Thyroid gland (tissue), 4 donors: ENCODE measurements at regions of chr18 and their contacts with region 1.

Region 1: DNA sequence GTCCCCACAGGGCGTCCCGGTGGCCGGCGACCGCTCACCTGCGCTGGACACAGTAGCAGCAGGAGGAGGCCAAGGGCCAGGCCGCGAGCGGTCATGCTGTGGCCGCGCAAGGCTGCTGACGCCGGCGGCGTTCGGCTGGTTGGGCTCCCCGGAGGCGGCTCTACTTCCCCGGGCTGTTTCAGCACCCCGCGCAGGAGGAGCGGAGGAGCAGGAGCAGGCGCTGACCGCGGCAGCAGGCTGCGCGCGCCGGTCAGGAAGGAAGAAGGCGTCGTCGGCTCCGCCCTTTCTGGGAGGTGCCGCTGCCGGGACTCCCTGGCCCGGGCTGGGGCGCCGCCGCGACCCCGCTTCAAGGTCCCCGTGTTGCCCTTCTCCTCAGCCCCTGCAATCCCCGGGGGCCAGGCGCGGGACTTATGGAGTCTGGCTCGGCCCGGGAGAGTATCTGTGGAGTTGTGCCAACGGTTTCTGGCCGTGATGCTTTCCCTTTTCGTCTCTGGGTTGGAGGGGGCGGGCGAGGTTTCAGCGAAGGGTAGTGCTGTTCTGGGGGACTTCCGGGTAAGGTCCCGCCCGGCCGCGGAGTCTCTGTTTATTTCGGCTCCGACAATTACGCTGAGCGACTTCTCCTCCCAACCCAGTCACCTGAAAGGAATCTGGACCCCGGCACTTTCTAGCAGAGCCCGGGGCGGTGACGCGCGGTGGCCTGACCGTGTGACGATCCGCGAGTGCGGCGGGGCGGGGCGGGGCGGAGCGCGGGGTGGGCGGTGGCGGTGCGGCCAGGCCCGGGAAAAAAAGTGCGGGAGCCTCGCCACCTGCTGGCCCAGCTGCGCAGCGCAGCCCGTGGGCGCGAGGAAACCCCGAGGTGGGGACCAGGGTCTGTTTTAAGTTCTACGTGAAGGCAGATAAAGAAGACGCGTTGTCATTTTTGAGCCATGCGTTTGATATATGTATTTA is at the start of gene NPC1:
- DNase-seq: peak; percentile 94 to 95
- H3K4me3 ChIP-seq: peak within 1 kb of the TSS; percentile 53 to 93 (median 60)
- H3K27ac ChIP-seq: peak within 1 kb of the TSS; percentile 99 to 100 (median 99)
- H3K4me1 ChIP-seq: peaks cover 12 to 23% of the 10 kb centered on the region in 2 donors
- H3K27me3 ChIP-seq: no peaks in the 10 kb centered on the region
- CTCF ChIP-seq: peak; percentile 63 to 98 (median 87)
- POLR2A ChIP-seq: peak in 1 of 2 donors; percentile 94
- total RNA-seq, gene NPC1: 32.8 to 68.6 (median 42.0) TPM

Region 2: GRCh38 chr18:23401400-23402347 is 184.8 kb before region 1 on chr18:
- intact Hi-C with region 1: no loop called
- DNase-seq: peak; percentile 87
- H3K4me3 ChIP-seq: no peak overlapping the region
- H3K27ac ChIP-seq: peak overlapping the region; percentile 75 to 78 (median 76)
- H3K4me1 ChIP-seq: peaks cover 27 to 28% of the 10 kb centered on the region in 2 donors
- H3K27me3 ChIP-seq: no peaks in the 10 kb centered on the region
- CTCF ChIP-seq: peak in 1 of 6 experiments; percentile 5
- POLR2A ChIP-seq: peak in 1 of 2 donors; percentile 5

Region 3: DNA sequence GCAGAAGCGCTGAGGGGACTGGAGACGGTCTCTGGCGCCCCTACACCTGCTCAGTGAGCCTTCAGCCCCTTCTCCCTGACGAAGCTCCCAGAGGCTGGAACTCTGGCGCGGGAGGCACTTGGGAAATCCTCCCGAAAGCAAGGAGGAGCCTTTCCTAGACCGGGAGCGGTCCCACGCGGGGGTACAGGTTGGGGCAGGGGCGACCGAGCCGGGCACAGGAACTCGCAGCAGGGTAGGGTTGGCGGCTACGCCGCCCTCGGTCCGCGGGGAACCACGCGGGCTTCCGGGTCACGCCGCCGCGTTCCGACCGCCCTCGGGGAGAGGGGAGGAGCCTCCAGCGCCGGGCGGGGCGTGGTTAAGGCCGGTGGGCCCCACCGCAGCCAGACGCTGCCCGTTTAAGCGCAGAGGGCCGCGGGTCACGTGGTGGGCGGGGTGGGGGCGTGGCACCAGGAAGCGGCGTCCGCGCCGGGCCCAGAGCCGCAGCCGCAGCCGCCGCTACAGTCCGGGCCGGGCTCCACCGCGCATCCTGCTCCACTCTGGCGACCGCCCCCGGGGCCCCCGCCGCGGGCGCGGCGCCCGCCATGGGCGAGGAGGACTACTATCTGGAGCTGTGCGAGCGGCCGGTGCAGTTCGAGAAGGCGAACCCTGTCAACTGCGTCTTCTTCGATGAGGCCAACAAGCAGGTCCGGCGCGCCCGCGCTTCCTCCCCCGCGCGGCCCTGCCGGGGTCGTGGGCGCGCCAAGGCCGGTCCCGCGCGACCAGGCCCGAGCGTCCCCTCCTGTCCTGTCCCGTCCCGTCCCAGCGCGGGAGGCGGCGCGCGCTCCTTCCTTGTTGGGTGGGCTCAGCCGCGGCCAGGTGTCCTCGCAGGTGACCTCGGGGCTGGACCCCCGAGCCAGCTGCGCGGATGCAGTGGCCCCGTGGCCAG is 83.2 kb before region 1 on chr18 and contains the start of gene RMC1:
- intact Hi-C with region 1: loop called (anchors 5 kb)
- DNase-seq: peak; percentile 95 to 97
- H3K4me3 ChIP-seq: peak within 1 kb of the TSS; percentile 38 to 96 (median 92)
- H3K27ac ChIP-seq: peak within 1 kb of the TSS; percentile 85 to 89 (median 89)
- H3K4me1 ChIP-seq: peaks cover 18 to 23% of the 10 kb centered on the region in 2 donors
- H3K27me3 ChIP-seq: no peaks in the 10 kb centered on the region
- CTCF ChIP-seq: peak in 3 of 6 experiments; percentile 21 to 33 (median 21)
- POLR2A ChIP-seq: peak; percentile 3 to 80
- total RNA-seq, gene RMC1: 18.1 to 25.1 (median 21.7) TPM

Region 4: GRCh38 chr18:23515911-23516546 is 70.5 kb before region 1 on chr18:
- intact Hi-C with region 1: loop called (anchors 5 kb)
- DNase-seq: peak; percentile 68 to 74
- H3K4me3 ChIP-seq: no peak overlapping the region
- H3K27ac ChIP-seq: no peak overlapping the region
- H3K4me1 ChIP-seq: peaks cover 0 to 11% of the 10 kb centered on the region in 2 donors
- H3K27me3 ChIP-seq: no peaks in the 10 kb centered on the region
- CTCF ChIP-seq: peak; percentile 62 to 84 (median 68)
- POLR2A ChIP-seq: no peak

Region 5: DNA sequence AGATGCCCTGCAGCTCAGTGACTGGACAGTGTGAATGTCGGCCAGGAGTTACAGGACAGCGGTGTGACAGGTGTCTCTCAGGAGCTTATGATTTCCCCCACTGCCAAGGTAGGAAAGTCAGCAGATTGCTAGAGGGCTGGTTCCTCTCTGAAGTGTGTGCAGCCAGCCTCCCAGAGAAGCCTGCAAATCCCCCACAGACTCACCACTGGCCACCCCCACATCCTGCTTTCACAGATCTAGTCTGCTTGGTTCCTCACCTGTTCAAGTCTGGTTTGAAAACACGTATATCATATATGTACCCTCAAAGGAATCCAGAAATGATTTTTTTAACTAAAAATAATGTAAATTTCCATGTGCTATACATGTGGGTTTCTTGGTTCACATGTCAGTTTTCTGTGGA is 223.9 kb after region 1 on chr18:
- intact Hi-C with region 1: no loop called
- DNase-seq: no peak
- H3K4me3 ChIP-seq: no peak overlapping the region
- H3K27ac ChIP-seq: no peak overlapping the region
- H3K4me1 ChIP-seq: no peaks in the 10 kb centered on the region
- H3K27me3 ChIP-seq: no peaks in the 10 kb centered on the region
- CTCF ChIP-seq: no peak
- POLR2A ChIP-seq: no peak